ENCODE measurements at regions of chr1 and their contacts with region 1.

Region 1: DNA sequence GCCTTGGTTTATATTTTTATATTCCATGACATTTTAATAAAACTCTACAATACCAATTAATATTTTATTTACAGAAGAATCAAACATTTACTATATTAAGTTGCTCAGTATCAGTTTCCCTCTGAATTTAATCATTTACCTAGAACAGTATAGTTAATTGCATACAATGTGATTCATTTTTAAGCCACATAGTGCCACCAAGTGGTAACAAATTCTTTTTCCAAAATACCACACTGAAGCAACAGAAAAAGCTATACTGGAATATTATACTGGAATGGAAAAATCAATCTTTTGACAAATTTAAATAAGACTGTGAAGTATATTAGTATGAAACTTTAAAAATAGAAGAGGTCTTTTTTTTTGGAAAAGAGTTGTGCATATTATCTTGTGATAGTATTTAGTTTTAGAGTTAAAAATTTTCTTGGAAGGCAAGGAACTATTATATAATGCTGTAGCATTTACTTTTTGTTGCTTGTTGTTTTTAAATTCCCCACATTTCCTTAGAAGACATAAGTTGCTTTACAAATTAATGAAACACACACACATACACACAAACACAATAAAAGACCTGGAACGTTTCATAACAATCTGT is 57.3 kb downstream of the ZNF644 start:
- DNase-seq: peak; percentile 21
- ATAC-seq: no peak; the same call in 2 of the 3 replicates
- H3K4me3 ChIP-seq: no peak overlapping the region
- H3K27ac ChIP-seq: no peak overlapping the region
- H3K4me1 ChIP-seq: peaks cover 13% of the 10 kb centered on the region
- H3K27me3 ChIP-seq: no peaks in the 10 kb centered on the region
- CTCF ChIP-seq: peak; percentile 49
- EP300 ChIP-seq: no peak
- POLR2A ChIP-seq: no peak
- RAD21 ChIP-seq: no peak

Region 2: GRCh38 chr1:90721210-90722194 is 243.0 kb before region 1 on chr1:
- CTCF ChIA-PET with region 1: interaction called, 18 read pairs
- POLR2A ChIA-PET with region 1: no interaction called
- in situ Hi-C with region 1: loop called (anchors 5 kb)
- intact Hi-C with region 1: loop called (anchors 1 kb)
- DNase-seq: peak; percentile 42
- ATAC-seq: peak; percentile 38; the same call in 2 of the 3 replicates
- H3K4me3 ChIP-seq: no peak overlapping the region
- H3K27ac ChIP-seq: no peak overlapping the region
- H3K4me1 ChIP-seq: 0 out of 2 replicates have a peak, but pooled peaks cover 13% of the 10 kb centered on the region
- H3K27me3 ChIP-seq: peaks cover 10 to 59% of the 10 kb centered on the region in 2 experiments; a peak in 4 of 5 replicates
- CTCF ChIP-seq: peak; percentile 74
- EP300 ChIP-seq: no peak
- POLR2A ChIP-seq: no peak
- RAD21 ChIP-seq: 0 out of 2 replicates have a peak, but pooled peaks have one; percentile 38

Region 3: DNA sequence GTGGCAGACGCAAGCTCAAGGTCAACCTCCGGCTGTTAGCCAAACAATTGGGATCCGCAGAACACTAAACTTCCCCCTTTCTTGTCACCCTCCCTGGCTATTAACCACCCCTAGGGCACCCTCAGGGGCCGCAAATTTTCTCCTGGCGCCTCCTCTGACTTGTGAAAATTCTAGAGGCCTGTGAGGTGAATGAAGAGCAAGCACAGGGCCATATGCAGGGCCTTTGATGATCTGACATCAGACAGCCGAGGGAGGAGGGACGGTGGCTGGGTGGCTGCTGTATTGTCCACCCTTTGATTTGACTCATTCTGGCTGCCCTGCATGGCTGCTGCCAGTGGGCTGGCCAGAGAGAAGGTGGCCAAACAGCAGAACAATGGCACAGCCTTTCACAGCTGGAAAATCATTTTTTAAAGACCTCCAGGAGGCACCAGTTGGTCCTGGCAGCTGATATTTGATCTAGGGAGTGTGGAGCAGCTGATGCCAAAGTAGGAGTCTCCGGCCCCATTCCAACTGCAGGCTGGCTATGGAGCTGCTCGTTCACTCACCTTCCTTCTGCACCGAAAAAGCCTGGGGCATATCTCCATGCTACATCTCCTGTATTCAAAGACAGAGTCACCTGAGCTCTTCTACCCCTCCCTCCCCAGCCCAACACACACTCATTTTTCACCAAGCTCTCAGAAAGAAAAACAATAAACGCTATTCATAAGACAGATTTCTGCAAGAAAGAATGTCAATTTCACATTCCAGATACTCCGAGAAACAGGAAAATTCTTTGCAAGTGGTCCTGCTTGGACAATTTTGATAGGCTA is 202.6 kb before region 1 on chr1:
- CTCF ChIA-PET with region 1: no interaction called
- POLR2A ChIA-PET with region 1: no interaction called
- in situ Hi-C with region 1: no loop called
- intact Hi-C with region 1: no loop called
- DNase-seq: no peak
- ATAC-seq: peak; percentile 85
- H3K4me3 ChIP-seq: no peak overlapping the region; a peak in 1 of 6 replicates
- H3K27ac ChIP-seq: no peak overlapping the region
- H3K4me1 ChIP-seq: peaks cover 13% of the 10 kb centered on the region
- H3K27me3 ChIP-seq: peaks cover 0 to 10% of the 10 kb centered on the region in 2 experiments; a peak in 2 of 5 replicates
- CTCF ChIP-seq: no peak
- EP300 ChIP-seq: no peak
- POLR2A ChIP-seq: no peak
- RAD21 ChIP-seq: no peak

Region 4: GRCh38 chr1:90926971-90927370 is 37.6 kb before region 1 on chr1:
- CTCF ChIA-PET with region 1: no interaction called
- POLR2A ChIA-PET with region 1: no interaction called
- in situ Hi-C with region 1: no loop called
- intact Hi-C with region 1: no loop called
- DNase-seq: no peak
- ATAC-seq: no peak
- H3K4me3 ChIP-seq: no peak overlapping the region
- H3K27ac ChIP-seq: no peak overlapping the region
- H3K4me1 ChIP-seq: peaks cover 15% of the 10 kb centered on the region
- H3K27me3 ChIP-seq: no peaks in the 10 kb centered on the region
- CTCF ChIP-seq: no peak
- EP300 ChIP-seq: no peak
- POLR2A ChIP-seq: no peak
- RAD21 ChIP-seq: no peak

Region 5: DNA sequence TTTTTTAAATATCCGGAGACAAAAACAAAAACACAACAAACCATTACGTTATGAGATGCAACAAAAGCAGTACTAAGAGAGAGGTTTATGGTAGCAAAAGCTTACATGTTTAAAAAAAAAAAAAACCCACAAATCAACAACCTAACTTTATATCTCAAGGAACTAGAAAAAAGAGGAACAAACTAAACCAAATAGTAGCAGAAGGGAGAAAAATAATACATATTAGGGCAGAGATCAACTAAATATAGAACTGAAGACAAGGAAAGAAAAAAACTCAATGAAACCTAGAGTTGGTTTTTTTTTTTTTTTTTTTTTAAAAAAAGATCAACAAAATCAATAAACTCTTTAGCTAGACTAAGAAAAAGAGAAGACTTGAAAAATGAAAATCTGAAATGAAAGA is 22.4 kb after region 1 on chr1:
- CTCF ChIA-PET with region 1: no interaction called
- POLR2A ChIA-PET with region 1: no interaction called
- in situ Hi-C with region 1: no loop called
- intact Hi-C with region 1: no loop called
- DNase-seq: no peak
- ATAC-seq: no peak
- H3K4me3 ChIP-seq: no peak overlapping the region
- H3K27ac ChIP-seq: no peak overlapping the region
- H3K4me1 ChIP-seq: no peaks in the 10 kb centered on the region
- H3K27me3 ChIP-seq: no peaks in the 10 kb centered on the region
- CTCF ChIP-seq: no peak
- EP300 ChIP-seq: no peak
- POLR2A ChIP-seq: no peak
- RAD21 ChIP-seq: no peak

Region 6: DNA sequence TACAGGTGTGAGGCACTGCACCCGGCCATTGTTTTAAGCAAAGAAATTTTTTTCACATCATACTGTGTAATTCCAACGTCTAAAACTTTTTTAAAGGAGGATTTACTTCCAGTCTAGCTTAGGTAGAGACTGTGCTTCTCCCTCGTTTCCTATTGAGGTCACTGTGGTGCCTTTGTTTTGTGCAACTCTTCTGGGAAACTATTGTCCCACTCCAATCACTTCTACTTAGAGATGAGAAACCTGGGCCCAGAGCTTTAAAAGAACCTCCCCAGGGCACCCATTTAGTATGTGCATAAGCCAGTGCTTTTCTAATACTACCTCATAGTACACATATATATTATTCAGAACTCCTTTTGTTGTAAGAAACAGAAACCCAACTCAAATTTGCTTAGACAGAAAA is 177.3 kb after region 1 on chr1:
- CTCF ChIA-PET with region 1: no interaction called
- POLR2A ChIA-PET with region 1: no interaction called
- in situ Hi-C with region 1: no loop called
- intact Hi-C with region 1: no loop called
- DNase-seq: no peak
- ATAC-seq: no peak
- H3K4me3 ChIP-seq: no peak overlapping the region
- H3K27ac ChIP-seq: no peak overlapping the region
- H3K4me1 ChIP-seq: no peaks in the 10 kb centered on the region
- H3K27me3 ChIP-seq: no peaks in the 10 kb centered on the region
- CTCF ChIP-seq: no peak
- EP300 ChIP-seq: no peak
- POLR2A ChIP-seq: no peak
- RAD21 ChIP-seq: no peak